ENCODE measurements at regions of chr2 and their contacts with region 1.

Region 1: DNA sequence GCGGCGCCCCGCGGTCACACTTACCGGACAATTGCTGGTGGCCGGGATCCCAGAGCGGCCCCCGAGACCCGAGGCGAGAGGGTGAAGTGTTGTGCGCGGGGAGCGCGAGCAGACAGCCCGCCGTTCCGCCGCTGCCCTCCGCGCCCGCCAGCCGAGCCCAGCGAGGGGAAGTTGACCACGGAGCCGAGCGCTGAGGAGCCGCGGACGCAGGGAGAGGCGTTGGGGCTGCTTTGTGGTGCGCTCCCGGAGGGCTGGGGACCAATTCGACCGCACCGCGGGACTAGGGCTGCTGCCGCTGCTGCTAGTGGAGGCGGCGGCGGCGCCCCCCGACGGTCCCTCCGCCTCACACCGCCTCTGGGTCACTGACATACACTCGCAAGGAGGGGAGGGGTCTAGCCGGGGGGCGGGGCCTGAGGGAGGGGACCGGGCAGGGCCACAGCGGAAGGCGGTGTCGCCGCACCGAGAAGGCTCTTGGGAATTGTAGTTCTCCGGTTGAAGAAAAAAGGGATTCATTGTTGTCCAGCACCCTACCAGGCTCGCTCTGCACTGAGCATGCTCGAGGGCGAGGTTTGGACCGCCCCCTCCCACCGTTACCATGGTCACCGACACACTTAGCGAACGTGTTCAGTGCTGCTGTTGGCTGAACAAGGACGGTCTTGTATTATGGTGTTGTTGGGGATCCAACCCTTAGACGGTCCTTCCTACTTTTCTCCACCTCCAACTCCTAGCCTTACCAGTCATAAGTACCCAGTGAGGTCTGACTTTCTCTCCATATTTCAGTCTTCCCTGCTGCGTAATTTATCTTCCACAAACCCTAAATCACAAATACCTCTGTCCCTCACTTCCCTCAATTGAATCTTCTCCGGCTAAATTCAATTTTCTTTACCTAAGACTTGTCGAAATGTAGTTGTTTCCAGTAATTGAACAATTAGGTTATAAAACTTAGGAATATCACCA is at the start of gene PELI1:
- DNase-seq: peak; percentile 97
- ATAC-seq: peak; percentile 89
- H3K4me3 Mint-ChIP-seq: peak within 1 kb of the TSS; percentile 84
- H3K27ac Mint-ChIP-seq: peak within 1 kb of the TSS; percentile 97
- H3K4me1 Mint-ChIP-seq: peaks cover 30% of the 10 kb centered on the region
- H3K27me3 Mint-ChIP-seq: no peaks in the 10 kb centered on the region
- total RNA-seq, gene PELI1: 21.3 to 29.7 TPM

Region 2: DNA sequence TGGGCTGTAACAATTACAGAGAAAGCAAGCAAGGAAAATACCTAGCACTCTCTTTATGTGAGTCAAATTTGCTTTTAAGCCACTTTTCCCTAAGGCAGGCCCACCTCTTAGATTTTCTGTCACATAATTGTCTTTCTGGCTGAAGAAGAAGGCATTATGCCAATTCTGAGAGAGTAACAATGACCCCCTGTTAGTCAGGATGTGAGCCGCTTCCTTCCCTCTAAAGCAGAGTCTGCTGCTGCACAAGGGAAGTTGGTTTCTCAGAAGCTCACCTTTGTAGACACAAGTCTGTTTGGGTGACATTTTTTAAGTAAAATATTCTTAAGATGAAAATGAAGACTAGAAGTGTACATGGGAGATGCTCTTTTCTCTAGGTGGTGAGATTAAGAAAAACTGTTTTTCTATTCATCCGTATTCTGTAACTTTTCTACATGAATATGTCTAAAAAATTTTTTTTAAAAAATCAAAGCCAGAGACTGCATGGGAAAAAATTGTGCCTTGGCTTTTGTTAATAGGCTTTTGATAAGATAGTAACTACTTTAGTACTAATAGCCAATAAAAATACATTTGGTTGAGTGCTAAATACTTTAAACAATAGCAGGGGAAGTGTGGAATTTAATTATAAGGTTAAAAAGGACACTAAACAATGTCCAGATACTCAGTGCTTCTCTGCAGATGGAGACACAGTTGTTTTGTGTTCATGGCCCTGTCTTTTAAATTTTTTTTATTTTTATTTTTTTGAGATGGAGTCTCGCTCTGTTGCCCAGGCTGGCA is 91.7 kb before region 1 on chr2:
- CTCF ChIA-PET with region 1: no interaction called
- POLR2A ChIA-PET with region 1: no interaction called
- intact Hi-C with region 1: loop called (anchors 1 to 2 kb)
- DNase-seq: no peak
- ATAC-seq: no peak
- H3K4me3 Mint-ChIP-seq: no peak overlapping the region
- H3K27ac Mint-ChIP-seq: no peak overlapping the region
- H3K4me1 Mint-ChIP-seq: peaks cover 40% of the 10 kb centered on the region
- H3K27me3 Mint-ChIP-seq: no peaks in the 10 kb centered on the region

Region 3: DNA sequence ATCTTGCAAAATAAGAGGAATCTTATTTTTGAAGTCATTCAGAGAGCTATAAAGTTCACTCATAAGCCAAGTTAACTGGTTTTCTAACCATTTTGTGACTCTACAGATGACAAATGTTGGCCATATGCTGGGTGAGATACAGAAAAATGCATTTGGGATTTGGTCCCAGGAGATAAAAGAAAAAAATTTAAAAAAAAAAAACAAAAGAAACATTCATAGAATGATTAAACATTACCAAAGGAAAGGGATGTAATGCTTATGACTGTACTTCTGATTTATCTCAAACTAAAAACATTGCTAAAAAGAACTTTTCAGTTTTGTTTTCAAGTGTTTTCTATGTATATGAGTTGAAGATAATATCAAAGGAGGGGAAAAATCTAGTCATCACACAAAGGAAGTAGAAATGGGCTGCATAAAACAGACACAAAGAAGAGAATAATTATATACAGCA is 43.2 kb before region 1 on chr2:
- CTCF ChIA-PET with region 1: interaction called, 4 read pairs
- POLR2A ChIA-PET with region 1: interaction called, 8 read pairs
- intact Hi-C with region 1: loop called (anchors 1 to 2 kb)
- DNase-seq: no peak
- ATAC-seq: peak; percentile 86
- H3K4me3 Mint-ChIP-seq: peak overlapping the region; percentile 3
- H3K27ac Mint-ChIP-seq: peak overlapping the region; percentile 51
- H3K4me1 Mint-ChIP-seq: peaks cover 54% of the 10 kb centered on the region
- H3K27me3 Mint-ChIP-seq: no peaks in the 10 kb centered on the region

Region 4: DNA sequence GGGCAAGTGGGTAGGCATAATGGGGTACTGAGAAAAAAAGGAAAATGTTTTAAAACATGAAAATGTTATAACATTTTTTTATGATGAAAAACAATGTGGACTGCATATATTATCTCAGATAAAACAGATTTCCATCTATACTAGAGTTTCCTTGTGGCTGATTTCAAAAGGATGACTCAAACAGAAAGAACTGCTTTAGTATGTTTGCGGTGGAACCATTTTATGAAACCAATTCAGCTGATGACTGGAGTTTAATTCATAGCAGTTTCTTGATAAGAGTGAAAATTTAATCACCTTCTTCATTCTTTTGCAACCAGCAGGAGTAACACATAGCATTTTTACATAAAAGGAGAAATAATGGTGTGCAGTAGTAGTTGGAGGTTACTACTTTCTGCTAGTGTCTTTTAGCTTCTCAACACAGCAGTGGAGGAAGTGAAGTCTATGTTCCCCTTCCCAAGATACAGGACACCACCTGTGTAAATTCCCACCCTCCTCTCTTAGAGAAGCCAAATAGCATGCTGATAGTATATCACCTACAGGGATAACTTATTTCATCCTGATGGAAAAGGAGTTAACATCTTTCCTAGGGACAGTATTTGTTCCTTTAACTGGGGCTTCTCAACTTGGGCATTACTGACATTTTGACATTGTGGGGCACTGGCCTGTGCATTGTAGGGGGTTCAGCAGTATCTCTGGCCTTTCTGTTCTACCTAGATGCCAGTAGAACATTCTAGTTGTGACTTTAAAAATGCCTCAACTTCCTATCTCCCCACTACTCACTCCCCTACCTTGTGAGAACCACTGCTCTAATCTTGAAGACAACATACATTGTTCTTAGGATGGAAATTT is 30.0 kb before region 1 on chr2:
- CTCF ChIA-PET with region 1: no interaction called
- POLR2A ChIA-PET with region 1: no interaction called
- intact Hi-C with region 1: loop called (anchors 1 kb)
- DNase-seq: no peak
- ATAC-seq: peak; percentile 85
- H3K4me3 Mint-ChIP-seq: peak overlapping the region; percentile 24
- H3K27ac Mint-ChIP-seq: peak overlapping the region; percentile 64
- H3K4me1 Mint-ChIP-seq: peaks cover 74% of the 10 kb centered on the region
- H3K27me3 Mint-ChIP-seq: no peaks in the 10 kb centered on the region

Region 5: GRCh38 chr2:64133828-64134227 is 10.5 kb before region 1 on chr2:
- CTCF ChIA-PET with region 1: interaction called, 4 read pairs
- POLR2A ChIA-PET with region 1: interaction called, 3 read pairs
- intact Hi-C with region 1: loop called (anchors 1 kb)
- DNase-seq: no peak
- ATAC-seq: peak; percentile 71
- H3K4me3 Mint-ChIP-seq: peak overlapping the region; percentile 11
- H3K27ac Mint-ChIP-seq: peak overlapping the region; percentile 72
- H3K4me1 Mint-ChIP-seq: peaks cover 87% of the 10 kb centered on the region
- H3K27me3 Mint-ChIP-seq: no peaks in the 10 kb centered on the region

Region 6: DNA sequence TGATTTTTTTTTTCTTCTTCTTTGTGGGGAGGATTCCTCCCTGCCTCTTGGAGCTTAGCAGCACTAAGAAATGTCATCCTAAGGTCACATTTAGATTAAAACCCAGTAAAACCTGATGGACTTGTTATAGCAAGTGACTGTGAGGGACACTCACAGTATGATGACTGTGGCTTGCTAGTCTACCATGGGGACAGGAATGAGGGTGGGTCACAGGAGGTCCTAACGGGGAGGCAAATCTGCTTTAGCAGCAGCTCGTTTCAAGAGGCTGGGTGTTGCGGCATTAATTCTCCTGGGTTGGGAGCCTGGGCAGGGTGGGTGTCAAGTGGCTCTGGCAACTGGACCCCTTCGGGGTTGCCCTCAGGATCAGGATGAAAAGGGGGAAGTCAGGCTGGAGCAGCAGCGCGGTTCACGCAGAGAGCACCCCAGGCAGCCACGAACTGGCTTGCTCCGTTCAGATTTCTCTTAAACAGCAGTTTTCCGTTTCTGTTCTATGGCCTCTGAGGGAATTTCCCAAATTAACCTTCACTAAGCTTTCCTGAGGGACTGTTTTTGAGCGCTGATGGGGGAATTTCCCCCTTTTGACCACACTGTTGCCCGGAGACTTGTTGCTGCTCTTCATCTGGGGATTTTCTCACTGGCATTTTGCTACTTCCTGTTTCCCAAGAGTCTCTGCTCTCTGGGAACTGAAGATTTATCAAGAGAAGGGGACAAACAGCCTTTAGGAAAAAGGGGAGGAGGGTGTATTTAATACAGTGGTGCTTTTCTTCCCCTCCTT is 59.7 kb after region 1 on chr2:
- CTCF ChIA-PET with region 1: no interaction called
- POLR2A ChIA-PET with region 1: no interaction called
- intact Hi-C with region 1: loop called (anchors 2 kb)
- DNase-seq: peak; percentile 59
- ATAC-seq: peak; percentile 53
- H3K4me3 Mint-ChIP-seq: peak overlapping the region; percentile 65
- H3K27ac Mint-ChIP-seq: peak overlapping the region; percentile 93
- H3K4me1 Mint-ChIP-seq: peaks cover 72% of the 10 kb centered on the region
- H3K27me3 Mint-ChIP-seq: no peaks in the 10 kb centered on the region